OCI-LY7 (cell line): ENCODE measurements at regions of chr3 and their contacts with region 1.

Region 1: DNA sequence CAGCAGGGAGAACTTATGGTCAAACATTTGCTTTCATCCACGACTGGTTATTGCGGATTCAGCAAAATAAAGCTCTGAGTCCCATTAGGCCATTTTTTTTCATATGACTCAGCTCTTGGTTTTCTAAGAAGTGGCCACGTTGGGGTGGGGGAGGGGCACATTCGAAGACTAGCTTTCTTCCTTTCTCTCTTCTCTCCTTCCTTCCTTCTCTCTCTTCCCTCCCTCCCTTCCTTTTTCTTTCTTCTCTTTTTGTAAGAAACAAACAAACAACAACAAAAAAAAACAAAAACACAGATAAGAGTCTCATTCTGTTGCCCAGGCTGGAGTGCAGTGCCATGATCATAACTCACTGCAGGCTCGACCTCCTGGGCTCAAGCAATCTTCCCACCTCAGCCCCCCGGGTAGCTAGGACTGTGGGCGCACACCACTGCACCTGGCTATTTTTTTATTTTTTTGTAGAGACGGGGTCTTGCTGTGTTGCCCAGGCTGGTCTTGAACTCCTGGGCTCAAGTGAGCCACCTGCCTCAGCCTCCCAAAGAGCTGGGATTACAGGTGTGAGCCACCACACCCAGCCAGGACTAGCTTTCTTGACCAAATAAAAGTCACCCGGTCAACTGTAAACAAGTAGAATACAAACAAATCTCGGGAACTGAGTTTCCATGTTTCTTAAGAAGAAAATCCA is 41.6 kb downstream of the ABCC5 start:
- DNase-seq: no peak
- H3K4me3 ChIP-seq: no peak overlapping the region
- H3K27ac ChIP-seq: no peak overlapping the region
- H3K4me1 ChIP-seq: peaks cover 12% of the 10 kb centered on the region
- CTCF ChIP-seq: no peak

Region 2: DNA sequence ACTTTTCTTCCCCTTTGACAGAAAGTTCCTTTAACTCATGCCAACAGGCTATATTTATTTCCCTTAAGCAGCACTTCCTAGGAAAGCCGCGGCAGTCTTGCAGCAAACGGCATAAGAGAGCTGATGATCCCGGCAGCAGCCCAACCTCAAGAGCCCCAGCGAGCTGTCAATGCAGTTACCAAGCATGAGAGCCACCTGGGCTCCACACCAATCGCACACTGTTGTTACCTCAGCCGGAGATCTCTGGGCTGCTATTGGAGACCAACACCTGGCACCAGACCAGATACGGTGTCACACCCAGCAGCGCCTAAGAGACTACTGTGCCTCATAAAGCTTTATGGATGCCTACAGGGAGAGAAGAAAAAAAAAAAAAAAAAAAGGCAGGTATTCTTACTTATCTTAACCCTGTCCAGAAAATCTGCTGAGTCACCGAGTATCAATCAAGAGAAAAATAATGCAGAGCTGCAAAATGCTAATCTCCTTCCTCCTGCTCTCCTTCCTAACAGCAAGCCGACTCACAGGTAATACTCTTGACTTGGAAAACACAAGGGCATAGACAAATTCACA is 29.9 kb after region 1 on chr3:
- CTCF ChIA-PET with region 1: interaction called, 14 read pairs
- POLR2A ChIA-PET with region 1: interaction called, 6 read pairs
- intact Hi-C with region 1: no loop called
- DNase-seq: peak; percentile 72
- H3K4me3 ChIP-seq: no peak overlapping the region
- H3K27ac ChIP-seq: peak overlapping the region; percentile 44
- H3K4me1 ChIP-seq: peaks cover 31% of the 10 kb centered on the region
- CTCF ChIP-seq: no peak

Region 3: DNA sequence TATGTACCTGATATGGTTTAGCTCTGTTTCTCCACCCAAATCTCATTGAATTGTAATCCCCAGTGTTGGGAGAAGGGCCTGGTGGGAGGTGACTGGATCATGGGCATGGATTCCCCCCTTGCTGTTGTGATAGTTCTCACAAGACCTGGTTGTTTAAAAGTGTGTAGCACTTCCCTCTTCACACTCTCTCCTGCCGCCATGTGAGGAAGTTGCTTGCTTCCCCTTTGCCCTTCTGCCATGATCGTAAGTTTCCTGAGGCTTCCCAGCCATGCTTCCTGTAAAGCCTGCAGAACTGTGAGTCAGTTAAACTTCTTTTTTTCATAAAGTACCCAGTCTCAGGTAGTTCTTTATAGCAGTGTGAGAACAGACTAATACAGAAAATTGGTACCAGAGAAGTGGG is 1083.6 kb after region 1 on chr3:
- CTCF ChIA-PET with region 1: no interaction called
- POLR2A ChIA-PET with region 1: no interaction called
- intact Hi-C with region 1: no loop called
- DNase-seq: no peak
- H3K4me3 ChIP-seq: no peak overlapping the region
- H3K27ac ChIP-seq: no peak overlapping the region
- H3K4me1 ChIP-seq: no peaks in the 10 kb centered on the region
- CTCF ChIP-seq: no peak